Uterus (tissue), 4 donors: ENCODE measurements at regions of chr2 and their contacts with region 1.

Region 1: GRCh38 chr2:29009711-29010564 is 28.8 kb downstream of the TOGARAM2 start:
- DNase-seq: no peak
- H3K4me3 ChIP-seq: no peak overlapping the region
- H3K27ac ChIP-seq: no peak overlapping the region
- H3K4me1 ChIP-seq: peaks cover 0 to 14% of the 10 kb centered on the region in 2 donors
- H3K27me3 ChIP-seq: no peaks in the 10 kb centered on the region
- CTCF ChIP-seq: no peak
- POLR2A ChIP-seq: no peak

Region 2: GRCh38 chr2:28325567-28326468 is 684.1 kb before region 1 on chr2:
- intact Hi-C with region 1: no loop called
- DNase-seq: no peak
- H3K4me3 ChIP-seq: no peak overlapping the region
- H3K27ac ChIP-seq: no peak overlapping the region
- H3K4me1 ChIP-seq: peaks cover 0 to 5% of the 10 kb centered on the region in 2 donors
- H3K27me3 ChIP-seq: no peaks in the 10 kb centered on the region
- CTCF ChIP-seq: no peak
- POLR2A ChIP-seq: no peak

Region 3: DNA sequence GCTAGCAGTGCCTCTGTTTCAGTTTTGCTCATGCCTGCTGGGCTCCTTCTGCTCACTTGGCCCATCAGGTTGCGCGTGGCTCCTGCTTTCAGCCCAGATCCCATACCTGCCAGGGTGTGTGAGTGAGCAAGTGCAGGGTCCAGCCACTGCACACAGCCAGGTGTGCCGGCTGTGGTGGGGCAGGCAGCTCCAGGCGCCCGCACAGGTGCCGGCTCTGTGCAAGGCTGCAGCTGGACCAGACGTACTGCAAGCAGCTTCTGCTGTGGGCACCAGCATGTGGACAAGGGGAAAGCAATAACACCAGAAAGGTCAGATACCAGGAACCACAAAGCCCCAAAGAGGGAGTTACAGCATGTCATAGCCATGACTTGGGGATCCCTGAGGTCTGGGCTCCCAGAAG is 69.9 kb after region 1 on chr2:
- intact Hi-C with region 1: loop called (anchors 2 kb)
- DNase-seq: no peak
- H3K4me3 ChIP-seq: no peak overlapping the region
- H3K27ac ChIP-seq: no peak overlapping the region
- H3K4me1 ChIP-seq: no peaks in the 10 kb centered on the region
- H3K27me3 ChIP-seq: no peaks in the 10 kb centered on the region
- CTCF ChIP-seq: no peak
- POLR2A ChIP-seq: no peak

Region 4: GRCh38 chr2:29206941-29207340 is 197.0 kb after region 1 on chr2:
- intact Hi-C with region 1: no loop called
- DNase-seq: no peak
- H3K4me3 ChIP-seq: no peak overlapping the region
- H3K27ac ChIP-seq: no peak overlapping the region
- H3K4me1 ChIP-seq: no peaks in the 10 kb centered on the region
- H3K27me3 ChIP-seq: no peaks in the 10 kb centered on the region
- CTCF ChIP-seq: no peak
- POLR2A ChIP-seq: no peak